Activated T-helper 1 cell treated with anti-CD3 and anti-CD28 coated beads, Interleukin-12 subunit alpha, Interleukin-12 subunit beta, Interleukin-2, Interleukin-4 antibody, amounts not matched to agents 30 ng/mL and 10 ng/mL and 1 ng/mL, durations not matched to agents 14 hours and 24 hours and 36 hours (primary cell): ENCODE measurements at regions of chr1 and their contacts with region 1.

Region 1: GRCh38 chr1:98053471-98054366 is 132.9 kb upstream of the DPYD start:
- DNase-seq: peak; percentile 46
- H3K4me3 Mint-ChIP-seq: peak overlapping the region; percentile 79
- H3K27ac Mint-ChIP-seq: no peak overlapping the region
- H3K4me1 Mint-ChIP-seq: peaks cover 28% of the 10 kb centered on the region
- H3K27me3 Mint-ChIP-seq: peaks cover 58% of the 10 kb centered on the region

Region 2: DNA sequence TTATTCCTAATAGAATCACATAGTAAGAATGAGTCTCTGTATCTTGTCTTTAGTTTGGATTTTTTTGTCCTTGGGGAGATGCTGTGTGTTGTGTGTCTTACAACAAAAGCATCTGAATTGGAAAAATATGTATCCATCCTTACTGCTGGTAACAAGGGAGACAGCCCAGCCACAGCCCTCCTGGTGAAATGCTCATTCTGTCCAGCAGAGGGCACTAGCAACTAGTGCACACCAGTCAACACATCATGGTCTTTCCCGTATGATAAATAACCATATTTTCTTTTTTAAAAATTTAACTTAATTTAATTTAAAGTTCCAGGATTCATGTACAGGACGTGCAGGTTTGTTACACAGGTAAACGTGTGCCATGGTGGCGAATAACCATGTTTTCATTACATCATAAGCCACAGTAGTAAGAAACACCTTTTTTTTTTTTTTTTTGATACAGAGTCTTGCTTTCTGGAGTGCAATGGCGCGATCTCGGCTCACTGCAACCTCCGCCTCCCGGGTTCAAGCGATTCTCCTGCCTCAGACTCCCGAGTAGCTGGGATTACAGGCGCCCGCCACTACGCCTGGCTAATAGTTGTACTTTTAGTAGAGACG is 1087.1 kb before region 1 on chr1:
- intact Hi-C with region 1: loop called (anchors 1 kb)
- DNase-seq: peak; percentile 43
- H3K4me3 Mint-ChIP-seq: no peak overlapping the region
- H3K27ac Mint-ChIP-seq: no peak overlapping the region
- H3K4me1 Mint-ChIP-seq: no peaks in the 10 kb centered on the region
- H3K27me3 Mint-ChIP-seq: peaks cover 7% of the 10 kb centered on the region

Region 3: GRCh38 chr1:97186404-97186803 is 867.3 kb before region 1 on chr1:
- intact Hi-C with region 1: loop called (anchors 1 kb)
- DNase-seq: no peak
- H3K4me3 Mint-ChIP-seq: no peak overlapping the region
- H3K27ac Mint-ChIP-seq: no peak overlapping the region
- H3K4me1 Mint-ChIP-seq: no peaks in the 10 kb centered on the region
- H3K27me3 Mint-ChIP-seq: no peaks in the 10 kb centered on the region

Region 4: GRCh38 chr1:97668945-97669344 is 384.8 kb before region 1 on chr1:
- intact Hi-C with region 1: loop called (anchors 1 kb)
- DNase-seq: no peak
- H3K4me3 Mint-ChIP-seq: no peak overlapping the region
- H3K27ac Mint-ChIP-seq: no peak overlapping the region
- H3K4me1 Mint-ChIP-seq: no peaks in the 10 kb centered on the region
- H3K27me3 Mint-ChIP-seq: no peaks in the 10 kb centered on the region

Region 5: DNA sequence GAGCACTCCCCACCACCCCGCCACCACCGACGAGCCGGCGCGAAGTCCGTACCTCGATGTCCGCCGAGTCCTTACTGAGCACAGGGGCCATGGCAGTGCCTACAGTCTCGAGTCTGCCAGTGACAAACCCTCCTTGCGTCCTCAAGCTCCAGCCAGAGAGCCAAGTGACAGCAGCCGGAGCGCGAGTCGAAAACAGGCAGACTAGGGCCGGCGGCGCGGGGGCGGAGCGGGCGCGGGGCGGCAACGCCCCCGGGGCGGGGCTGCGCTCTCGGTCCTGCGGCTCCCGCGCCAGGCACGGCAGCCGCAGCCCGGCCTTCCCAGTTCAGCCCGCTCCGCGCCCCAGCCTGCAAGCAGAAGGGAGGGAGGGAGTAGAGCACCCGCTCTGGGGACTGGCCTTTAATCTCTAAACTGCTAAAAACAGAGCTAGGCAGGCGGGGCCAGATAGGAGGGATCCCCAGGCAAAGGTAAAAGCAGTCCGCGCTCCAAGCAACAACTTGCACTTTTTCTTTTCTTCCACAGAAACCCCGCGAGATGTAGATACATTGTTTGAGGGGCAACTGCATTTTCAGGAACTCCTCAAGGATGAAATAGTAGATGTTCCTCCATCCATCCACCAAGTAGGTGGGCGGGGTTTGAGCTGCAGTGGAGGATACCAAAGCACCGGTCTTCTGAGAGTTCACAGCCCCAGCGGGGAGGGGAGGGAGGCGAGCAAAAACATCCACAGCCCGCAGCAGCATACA is 132.7 kb before region 1 on chr1 and contains the start of gene DPYD:
- intact Hi-C with region 1: loop called (anchors 2 kb)
- DNase-seq: peak; percentile 81
- H3K4me3 Mint-ChIP-seq: peak within 1 kb of the TSS; percentile 93
- H3K27ac Mint-ChIP-seq: peak within 1 kb of the TSS; percentile 93
- H3K4me1 Mint-ChIP-seq: peaks cover 66% of the 10 kb centered on the region
- H3K27me3 Mint-ChIP-seq: no peaks in the 10 kb centered on the region
- total RNA-seq, gene DPYD: 16.2 and 17.9 TPM in 2 replicates